ENCODE measurements at regions of chr1 and their contacts with region 1.

Region 1: DNA sequence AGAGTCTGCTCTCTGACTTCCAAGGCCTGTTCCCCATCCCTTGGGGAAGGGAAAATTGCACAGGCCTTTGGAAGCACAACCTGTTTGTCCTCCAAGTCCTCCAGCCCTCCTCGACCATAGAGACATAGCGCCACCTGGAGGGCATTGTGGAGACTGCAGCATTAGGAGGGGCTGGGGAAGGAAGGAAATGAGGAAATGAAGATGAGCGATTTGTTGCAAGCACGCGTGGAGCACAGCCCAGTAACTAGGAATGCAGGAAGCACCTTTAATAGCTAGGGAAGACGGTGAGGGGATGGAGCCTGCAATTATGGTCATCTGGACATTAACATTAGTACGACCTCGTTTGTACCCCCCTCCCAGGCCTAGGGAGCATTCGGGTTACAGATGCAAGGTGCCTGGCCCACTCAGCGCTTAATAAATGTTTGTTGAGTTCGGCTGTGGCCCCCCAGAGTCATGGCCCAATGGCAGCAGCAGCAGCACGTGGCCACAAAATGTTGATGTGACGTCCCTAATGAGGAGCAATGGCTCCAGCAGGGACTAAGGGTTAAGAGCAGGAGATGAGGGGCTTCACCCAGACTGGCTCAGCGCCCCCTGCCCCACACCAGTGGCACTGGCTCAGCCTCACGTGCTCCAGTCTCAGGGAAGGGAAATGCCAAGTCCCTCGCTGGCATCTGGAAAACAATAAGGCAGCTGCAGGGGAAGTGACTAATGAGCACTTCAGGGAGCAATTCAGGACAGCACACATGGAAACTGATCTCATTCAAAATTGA is 8.0 kb upstream of the CAMK2N1 start:
- DNase-seq: peak; percentile 77 to 86 (median 82)
- ATAC-seq: peak; percentile 81
- H3K4me3 ChIP-seq: no peak overlapping the region
- H3K27ac ChIP-seq: no peak overlapping the region
- H3K4me1 ChIP-seq: peaks cover 4% of the 10 kb centered on the region
- H3K27me3 ChIP-seq: no peaks in the 10 kb centered on the region
- CTCF ChIP-seq: peak; percentile 89 to 99 (median 98)
- POLR2A ChIP-seq: no peak

Region 2: GRCh38 chr1:19918057-19918456 is 576.0 kb before region 1 on chr1:
- intact Hi-C with region 1: loop called (anchors 10 kb)
- DNase-seq: peak; percentile 80 to 87 (median 84)
- ATAC-seq: peak; percentile 76
- H3K4me3 ChIP-seq: no peak overlapping the region
- H3K27ac ChIP-seq: no peak overlapping the region
- H3K4me1 ChIP-seq: no peaks in the 10 kb centered on the region
- H3K27me3 ChIP-seq: no peaks in the 10 kb centered on the region
- CTCF ChIP-seq: peak; percentile 64 to 91 (median 88)
- POLR2A ChIP-seq: no peak

Region 3: DNA sequence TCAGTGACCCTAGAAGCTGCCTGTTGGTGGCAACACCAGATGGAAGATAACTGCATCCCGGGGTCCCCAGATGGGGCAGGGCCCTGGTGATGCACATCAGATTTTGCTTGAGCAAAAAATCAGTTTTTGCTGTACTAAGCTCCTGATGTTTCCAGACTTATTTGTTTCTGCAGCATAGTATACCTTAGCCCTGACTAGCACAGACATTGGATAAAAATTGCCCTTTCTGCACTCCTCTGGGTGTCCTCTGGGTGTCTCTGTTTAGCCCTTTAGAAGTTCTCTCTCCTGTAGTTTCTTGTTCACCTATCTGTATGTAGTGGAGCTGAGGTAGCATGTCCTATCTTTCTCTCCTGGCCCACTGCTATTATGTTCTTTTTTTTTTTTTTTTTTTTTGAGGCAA is 277.4 kb before region 1 on chr1:
- intact Hi-C with region 1: loop called (anchors 5 kb)
- DNase-seq: no peak
- ATAC-seq: no peak
- H3K4me3 ChIP-seq: no peak overlapping the region
- H3K27ac ChIP-seq: no peak overlapping the region
- H3K4me1 ChIP-seq: peaks cover 10% of the 10 kb centered on the region
- H3K27me3 ChIP-seq: no peaks in the 10 kb centered on the region
- CTCF ChIP-seq: peak in 3 of 7 experiments; percentile 12 to 21 (median 16)
- POLR2A ChIP-seq: no peak

Region 4: GRCh38 chr1:20376880-20377494 is 117.0 kb before region 1 on chr1:
- intact Hi-C with region 1: loop called (anchors 10 kb)
- DNase-seq: peak in 3 of 4 donors; percentile 37 to 51 (median 42)
- ATAC-seq: peak; percentile 48
- H3K4me3 ChIP-seq: no peak overlapping the region
- H3K27ac ChIP-seq: no peak overlapping the region
- H3K4me1 ChIP-seq: no peaks in the 10 kb centered on the region
- H3K27me3 ChIP-seq: no peaks in the 10 kb centered on the region
- CTCF ChIP-seq: peak; percentile 32 to 72 (median 53)
- POLR2A ChIP-seq: no peak